Activated CD4-positive, alpha-beta T cell treated with anti-CD3 and anti-CD28 coated beads for 36 hours (primary cell): ENCODE measurements at regions of chr2 and their contacts with region 1.

Region 1: GRCh38 chr2:143128681-143129580 is at the start of gene ARHGAP15:
- DNase-seq: peak; percentile 83
- ATAC-seq: peak; percentile 81
- H3K4me3 Mint-ChIP-seq: peak within 1 kb of the TSS; percentile 71
- H3K27ac Mint-ChIP-seq: peak within 1 kb of the TSS; percentile 99
- H3K4me1 Mint-ChIP-seq: peaks cover 34% of the 10 kb centered on the region
- H3K27me3 Mint-ChIP-seq: no peaks in the 10 kb centered on the region
- total RNA-seq, gene ARHGAP15: 62.6 to 64.3 TPM

Region 2: DNA sequence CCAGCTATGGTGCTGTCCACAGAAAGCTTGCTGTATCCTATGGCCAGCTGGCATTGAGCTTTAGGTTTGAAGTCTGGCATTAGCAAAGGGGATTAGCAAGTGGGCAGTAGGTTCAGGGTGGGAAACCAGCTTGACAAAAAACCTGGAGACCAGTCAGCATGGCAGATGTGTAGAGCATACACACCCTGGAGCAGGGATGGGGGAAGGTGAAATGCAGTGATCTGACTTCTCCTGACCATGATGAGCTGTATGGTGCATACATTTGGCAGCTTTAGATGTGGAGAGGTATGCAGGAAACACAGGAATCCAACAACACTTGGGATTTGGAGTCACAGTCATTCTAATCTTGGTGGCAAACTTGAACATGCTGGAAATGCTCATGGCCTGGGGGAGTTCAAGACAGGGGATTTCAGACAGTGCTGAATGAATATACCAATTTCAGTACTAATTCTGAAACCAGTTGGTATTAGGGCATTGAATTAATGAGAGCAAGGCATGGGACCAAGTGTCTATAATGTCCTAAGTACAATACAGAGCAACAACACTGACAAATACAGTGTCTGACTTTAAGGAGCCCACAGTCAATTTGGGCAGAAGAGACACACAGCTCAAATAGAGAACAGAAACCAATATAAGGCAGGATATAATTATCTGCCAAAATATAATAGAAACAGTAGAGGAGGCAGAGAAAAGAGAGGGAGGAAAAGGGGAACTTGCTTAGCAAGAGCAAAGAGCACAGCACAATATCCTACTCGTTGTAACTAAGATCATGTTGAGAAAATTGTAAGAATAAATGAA is 12.1 kb after region 1 on chr2:
- CTCF ChIA-PET with region 1: interaction called, 7 read pairs
- POLR2A ChIA-PET with region 1: interaction called, 3 read pairs
- intact Hi-C with region 1: loop called in 1 of 2 experiments (anchors 1 kb)
- DNase-seq: peak; percentile 26
- ATAC-seq: peak; percentile 63
- H3K4me3 Mint-ChIP-seq: peak overlapping the region; percentile 62
- H3K27ac Mint-ChIP-seq: peak overlapping the region; percentile 28
- H3K4me1 Mint-ChIP-seq: peaks cover 89% of the 10 kb centered on the region
- H3K27me3 Mint-ChIP-seq: no peaks in the 10 kb centered on the region

Region 3: GRCh38 chr2:143150287-143150686 is 21.4 kb after region 1 on chr2:
- CTCF ChIA-PET with region 1: interaction called, 6 read pairs
- POLR2A ChIA-PET with region 1: interaction called, 3 read pairs
- intact Hi-C with region 1: loop called (anchors 2 kb)
- DNase-seq: no peak
- ATAC-seq: peak; percentile 39
- H3K4me3 Mint-ChIP-seq: peak overlapping the region; percentile 44
- H3K27ac Mint-ChIP-seq: peak overlapping the region; percentile 91
- H3K4me1 Mint-ChIP-seq: peaks cover 83% of the 10 kb centered on the region
- H3K27me3 Mint-ChIP-seq: no peaks in the 10 kb centered on the region

Region 4: DNA sequence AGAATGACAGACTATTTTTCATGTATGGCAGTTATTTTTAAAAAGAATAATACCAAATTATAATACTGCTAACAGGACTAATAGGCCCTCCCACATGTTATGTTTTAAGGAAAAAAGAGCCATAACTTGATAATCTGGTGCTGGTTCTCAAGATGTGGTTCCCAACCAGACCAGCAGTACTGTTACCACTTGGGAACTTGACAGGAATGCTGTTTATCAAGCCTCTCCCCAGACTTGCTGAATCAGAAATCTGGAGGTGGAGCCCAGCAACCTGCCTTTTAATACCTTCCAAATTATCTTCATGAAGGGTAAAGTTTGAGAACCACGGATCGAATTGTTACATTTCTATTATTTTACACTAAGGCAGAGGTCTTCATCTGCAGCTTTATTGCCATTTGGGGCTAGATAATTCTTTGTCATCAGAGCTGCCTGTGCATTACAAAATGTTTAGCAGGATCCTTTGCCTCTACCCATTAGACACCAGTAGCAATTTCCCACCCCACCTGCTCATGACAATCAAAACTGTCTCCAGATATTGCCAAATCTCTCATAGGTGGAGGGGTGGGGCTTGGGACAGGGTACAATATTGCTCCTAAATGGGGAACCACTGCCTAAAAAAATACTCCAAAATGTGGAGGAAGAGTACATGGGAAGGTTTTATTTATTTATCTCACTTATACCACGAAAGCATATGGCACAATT is 629.8 kb after region 1 on chr2:
- CTCF ChIA-PET with region 1: no interaction called
- POLR2A ChIA-PET with region 1: no interaction called
- intact Hi-C with region 1: no loop called
- DNase-seq: no peak
- ATAC-seq: no peak
- H3K4me3 Mint-ChIP-seq: no peak overlapping the region
- H3K27ac Mint-ChIP-seq: no peak overlapping the region
- H3K4me1 Mint-ChIP-seq: no peaks in the 10 kb centered on the region
- H3K27me3 Mint-ChIP-seq: no peaks in the 10 kb centered on the region